GM12878 (cell line): ENCODE measurements at regions of chr2 and their contacts with region 1.

Region 1: DNA sequence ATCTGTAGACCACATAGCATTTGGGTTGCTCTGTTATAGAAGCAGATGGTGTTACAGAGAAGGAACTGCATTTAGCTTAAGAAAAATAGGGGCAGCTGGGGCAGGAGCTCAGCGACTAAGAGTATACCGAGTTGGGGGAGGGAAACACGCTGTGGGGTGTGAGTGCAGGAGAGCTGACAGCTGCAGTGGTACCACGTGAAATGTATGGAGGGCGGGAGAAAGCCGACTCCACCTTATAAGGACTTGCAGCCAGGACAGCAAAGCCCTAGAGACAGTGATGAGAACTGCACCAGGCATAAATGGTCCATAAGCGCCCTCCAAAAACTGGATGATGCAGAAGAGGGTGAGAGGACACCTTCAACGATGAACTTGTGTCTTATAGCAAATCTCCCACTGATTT is 237.6 kb downstream of the PRKCE start:
- DNase-seq: peak; percentile 73
- ATAC-seq: peak; percentile 96
- H3K4me3 ChIP-seq: no peak overlapping the region
- H3K27ac ChIP-seq: peak overlapping the region; percentile 85
- H3K4me1 ChIP-seq: peaks cover 54% of the 10 kb centered on the region
- H3K27me3 ChIP-seq: no peaks in the 10 kb centered on the region
- CTCF ChIP-seq: peak; percentile 31 to 63 (median 51); a peak in 4 of 6 replicates
- EP300 ChIP-seq: peak in 1 of 2 experiments; percentile 47; a peak in 1 of 4 replicates
- POLR2A ChIP-seq: 0 out of 2 replicates have a peak, but pooled peaks have one; percentile 29
- RAD21 ChIP-seq: peak; percentile 13; the same call in 1 of the 2 replicates

Region 2: GRCh38 chr2:45843136-45843535 is 45.9 kb before region 1 on chr2:
- CTCF ChIA-PET with region 1: interaction called, 48 read pairs
- POLR2A ChIA-PET with region 1: interaction called, 10 read pairs
- RAD21 ChIA-PET with region 1: interaction called, 100 read pairs
- SMC1A ChIA-PET with region 1: interaction called, 224 read pairs
- in situ Hi-C with region 1: no loop called
- intact Hi-C with region 1: loop called (anchors 2 kb)
- DNase-seq: no peak
- ATAC-seq: peak; percentile 76
- H3K4me3 ChIP-seq: peak overlapping the region; percentile 35; the same call in 1 of the 2 replicates
- H3K27ac ChIP-seq: peak overlapping the region; percentile 94
- H3K4me1 ChIP-seq: peaks cover 70% of the 10 kb centered on the region
- H3K27me3 ChIP-seq: no peaks in the 10 kb centered on the region
- CTCF ChIP-seq: no peak
- EP300 ChIP-seq: peak; percentile 91 to 97
- POLR2A ChIP-seq: no peak
- RAD21 ChIP-seq: no peak

Region 3: GRCh38 chr2:45860136-45861121 is 28.6 kb before region 1 on chr2:
- CTCF ChIA-PET with region 1: interaction called, 10 read pairs
- POLR2A ChIA-PET with region 1: interaction called, 4 read pairs
- RAD21 ChIA-PET with region 1: interaction called, 80 read pairs
- SMC1A ChIA-PET with region 1: interaction called, 124 read pairs
- in situ Hi-C with region 1: no loop called
- intact Hi-C with region 1: no loop called
- DNase-seq: no peak
- ATAC-seq: peak; percentile 81
- H3K4me3 ChIP-seq: peak overlapping the region; percentile 60
- H3K27ac ChIP-seq: peak overlapping the region; percentile 76
- H3K4me1 ChIP-seq: peaks cover 28% of the 10 kb centered on the region
- H3K27me3 ChIP-seq: no peaks in the 10 kb centered on the region
- CTCF ChIP-seq: no peak; a peak in 1 of 6 replicates
- EP300 ChIP-seq: peak in 1 of 2 experiments; percentile 21; a peak in 1 of 4 replicates
- POLR2A ChIP-seq: no peak
- RAD21 ChIP-seq: 0 out of 2 replicates have a peak, but pooled peaks have one; percentile 6

Region 4: DNA sequence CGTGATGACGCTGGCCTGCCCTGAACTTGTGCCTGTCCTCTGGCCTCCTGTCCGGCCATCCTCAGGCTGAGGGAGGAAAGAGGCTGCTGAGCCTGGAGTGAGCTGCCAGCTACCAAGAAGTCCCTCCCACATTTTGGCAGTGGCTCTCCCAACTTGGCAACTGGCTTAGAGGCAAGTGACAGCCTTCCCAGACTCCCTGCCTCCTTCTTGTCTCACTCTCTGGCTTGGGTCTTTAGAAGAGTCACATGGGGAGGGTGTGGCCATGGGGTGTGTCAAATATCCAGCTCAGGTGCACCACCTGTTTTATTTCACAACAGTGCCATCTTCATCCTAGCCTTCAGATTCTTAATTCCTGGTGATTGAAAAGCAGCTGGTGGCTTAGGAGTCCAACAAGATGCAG is 14.7 kb before region 1 on chr2:
- CTCF ChIA-PET with region 1: interaction called, 26 read pairs
- POLR2A ChIA-PET with region 1: interaction called, 19 read pairs
- RAD21 ChIA-PET with region 1: interaction called, 80 read pairs
- SMC1A ChIA-PET with region 1: interaction called, 124 read pairs
- in situ Hi-C with region 1: no loop called
- intact Hi-C with region 1: no loop called
- DNase-seq: no peak
- ATAC-seq: no peak
- H3K4me3 ChIP-seq: no peak overlapping the region
- H3K27ac ChIP-seq: no peak overlapping the region
- H3K4me1 ChIP-seq: peaks cover 9% of the 10 kb centered on the region
- H3K27me3 ChIP-seq: no peaks in the 10 kb centered on the region
- CTCF ChIP-seq: no peak
- EP300 ChIP-seq: no peak
- POLR2A ChIP-seq: no peak
- RAD21 ChIP-seq: no peak

Region 5: DNA sequence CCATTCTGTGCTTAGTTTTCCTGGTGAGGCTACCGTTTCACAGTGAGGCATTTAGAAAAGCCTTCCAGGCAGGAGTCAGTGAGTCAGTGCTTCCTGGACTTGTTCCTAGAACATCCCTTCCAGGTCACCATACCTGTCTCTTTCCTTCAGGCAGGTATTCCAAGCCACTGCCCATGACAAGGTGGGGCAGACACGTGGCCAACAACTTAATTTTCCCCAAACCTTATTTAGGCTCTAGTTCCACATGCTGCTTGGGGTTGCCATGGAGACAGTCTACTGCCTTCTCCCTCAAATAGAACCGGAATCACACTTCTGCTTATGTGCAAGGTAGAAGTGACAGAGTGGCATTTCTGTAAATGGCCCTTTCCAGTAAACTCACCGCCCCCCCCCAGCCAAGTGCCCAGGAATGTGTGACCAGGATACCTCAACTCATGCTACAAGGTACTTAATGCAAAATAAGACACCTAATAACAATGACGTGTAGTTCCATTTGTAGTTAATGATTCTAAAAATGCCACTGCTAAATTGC is 20.7 kb after region 1 on chr2:
- CTCF ChIA-PET with region 1: interaction called, 5 read pairs
- POLR2A ChIA-PET with region 1: interaction called, 23 read pairs
- RAD21 ChIA-PET with region 1: interaction called, 53 read pairs
- SMC1A ChIA-PET with region 1: interaction called, 55 read pairs
- in situ Hi-C with region 1: no loop called
- intact Hi-C with region 1: no loop called
- DNase-seq: no peak
- ATAC-seq: peak; percentile 90
- H3K4me3 ChIP-seq: peak overlapping the region; percentile 13; the same call in 1 of the 2 replicates
- H3K27ac ChIP-seq: peak overlapping the region; percentile 66
- H3K4me1 ChIP-seq: peaks cover 35% of the 10 kb centered on the region
- H3K27me3 ChIP-seq: no peaks in the 10 kb centered on the region
- CTCF ChIP-seq: no peak
- EP300 ChIP-seq: peak; percentile 31 to 38; a peak in 2 of 4 replicates
- POLR2A ChIP-seq: no peak
- RAD21 ChIP-seq: 0 out of 2 replicates have a peak, but pooled peaks have one; percentile 18

Region 6: DNA sequence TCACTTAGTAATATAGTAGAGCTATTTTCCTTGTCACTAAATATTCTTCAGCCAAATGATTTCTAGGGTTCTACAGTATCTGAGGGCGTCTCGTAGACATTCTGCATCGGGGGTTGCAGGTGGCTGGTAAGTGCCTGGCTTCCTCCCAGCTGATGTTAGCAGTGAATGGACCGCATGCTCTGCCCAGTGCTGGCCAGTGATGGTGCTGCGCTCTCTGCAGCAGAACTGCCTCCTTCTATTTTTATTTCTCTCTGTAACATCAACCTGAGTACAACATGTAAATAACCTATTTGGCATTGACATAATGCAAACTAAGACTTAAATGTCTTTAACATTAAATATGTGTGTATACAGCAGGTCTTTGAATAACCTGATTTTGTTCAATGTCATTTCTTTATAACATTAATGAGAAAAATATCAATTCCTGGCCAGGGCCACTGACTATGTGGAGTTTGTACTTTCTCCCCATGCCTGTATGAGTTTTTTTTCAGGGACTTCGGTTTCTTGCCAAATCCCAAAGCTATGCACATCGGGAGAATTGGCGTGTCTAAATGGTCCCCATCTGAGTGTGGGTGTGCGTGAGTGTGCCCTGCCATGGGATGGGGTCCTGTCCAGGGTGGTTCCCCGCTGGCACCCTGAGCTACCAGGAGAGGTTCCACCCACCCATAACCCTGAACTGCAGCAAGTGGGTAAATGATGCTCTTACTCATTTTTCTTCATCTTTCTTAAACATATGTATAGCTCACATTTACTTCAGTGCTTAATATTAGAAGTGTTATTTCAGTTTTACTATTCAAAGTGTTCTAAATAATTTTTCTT is 129.9 kb after region 1 on chr2:
- CTCF ChIA-PET with region 1: no interaction called
- POLR2A ChIA-PET with region 1: no interaction called
- RAD21 ChIA-PET with region 1: no interaction called
- SMC1A ChIA-PET with region 1: no interaction called
- in situ Hi-C with region 1: no loop called
- intact Hi-C with region 1: no loop called
- DNase-seq: no peak
- ATAC-seq: no peak
- H3K4me3 ChIP-seq: no peak overlapping the region
- H3K27ac ChIP-seq: no peak overlapping the region
- H3K4me1 ChIP-seq: no peaks in the 10 kb centered on the region
- H3K27me3 ChIP-seq: no peaks in the 10 kb centered on the region
- CTCF ChIP-seq: no peak
- EP300 ChIP-seq: no peak
- POLR2A ChIP-seq: no peak
- RAD21 ChIP-seq: no peak